Ovary (tissue), 10 donors: ENCODE measurements at regions of chr9 and their contacts with region 1.

Region 1: DNA sequence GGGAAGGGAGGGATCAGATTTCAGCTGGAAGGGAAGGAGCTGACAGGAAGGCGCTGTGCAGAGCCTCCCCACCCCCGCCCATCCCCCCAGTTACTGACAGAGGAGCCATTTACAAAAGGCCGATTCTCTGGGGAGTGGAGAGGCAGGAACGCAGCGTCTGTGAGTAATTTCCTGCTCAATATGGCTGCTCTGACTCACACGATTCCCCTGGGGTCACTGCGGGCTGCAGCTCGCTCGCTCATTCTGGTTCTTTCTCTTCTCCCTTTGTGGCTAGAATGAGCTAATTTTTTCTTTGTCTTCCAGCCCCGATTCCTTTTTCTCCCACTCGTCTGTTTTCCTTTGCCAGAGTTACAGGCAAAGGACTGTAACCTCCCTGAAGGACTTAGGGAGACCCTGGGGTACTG is 28.8 kb downstream of the PTPA start:
- DNase-seq: peak; percentile 86 to 95 (median 91)
- H3K4me3 ChIP-seq: peak overlapping the region; percentile 29
- H3K27ac ChIP-seq: peak overlapping the region; percentile 97 to 98
- H3K4me1 ChIP-seq: peaks cover 46% of the 10 kb centered on the region
- H3K27me3 ChIP-seq: no peaks in the 10 kb centered on the region
- CTCF ChIP-seq: no peak
- EP300 ChIP-seq: peak; percentile 76
- POLR2A ChIP-seq: no peak

Region 2: GRCh38 chr9:129028192-129028957 is 111.6 kb before region 1 on chr9 and contains the start of gene SH3GLB2:
- intact Hi-C with region 1: no loop called
- DNase-seq: peak; percentile 95 to 99 (median 98)
- H3K4me3 ChIP-seq: peak within 1 kb of the TSS; percentile 89
- H3K27ac ChIP-seq: peak within 1 kb of the TSS in 1 of 2 donors; percentile 37
- H3K4me1 ChIP-seq: peaks cover 1% of the 10 kb centered on the region
- H3K27me3 ChIP-seq: no peaks in the 10 kb centered on the region
- CTCF ChIP-seq: peak; percentile 78 to 96 (median 87)
- EP300 ChIP-seq: no peak
- POLR2A ChIP-seq: no peak
- total RNA-seq, gene SH3GLB2: 57.8 to 105 (median 88.8) TPM

Region 3: GRCh38 chr9:129110740-129111527 is 29.1 kb before region 1 on chr9 and contains the starts of genes CRAT and PTPA:
- intact Hi-C with region 1: no loop called
- DNase-seq: peak; percentile 96 to 98 (median 97)
- H3K4me3 ChIP-seq: peak within 1 kb of the TSS; percentile 78
- H3K27ac ChIP-seq: peak within 1 kb of the TSS; percentile 69 to 90
- H3K4me1 ChIP-seq: peaks cover 5% of the 10 kb centered on the region
- H3K27me3 ChIP-seq: no peaks in the 10 kb centered on the region
- CTCF ChIP-seq: no peak
- EP300 ChIP-seq: peak; percentile 50
- POLR2A ChIP-seq: peak; percentile 80
- total RNA-seq, gene CRAT: 23.0 to 42.7 (median 39.1) TPM
- total RNA-seq, gene PTPA: 32.1 to 107 (median 89.2) TPM

Region 4: GRCh38 chr9:129177791-129178559 is 38.0 kb after region 1 on chr9 and contains the start of gene IER5L:
- intact Hi-C with region 1: loop called in 3 of 4 experiments (anchors 2 kb)
- DNase-seq: peak; percentile 96 to 98 (median 98)
- H3K4me3 ChIP-seq: peak within 1 kb of the TSS; percentile 52
- H3K27ac ChIP-seq: peak within 1 kb of the TSS; percentile 97 to 99
- H3K4me1 ChIP-seq: peaks cover 8% of the 10 kb centered on the region
- H3K27me3 ChIP-seq: no peaks in the 10 kb centered on the region
- CTCF ChIP-seq: peak in 1 of 3 donors; percentile 25
- EP300 ChIP-seq: no peak
- POLR2A ChIP-seq: peak; percentile 95
- total RNA-seq, gene IER5L: 15.4 to 74.3 (median 45.0) TPM

Region 5: DNA sequence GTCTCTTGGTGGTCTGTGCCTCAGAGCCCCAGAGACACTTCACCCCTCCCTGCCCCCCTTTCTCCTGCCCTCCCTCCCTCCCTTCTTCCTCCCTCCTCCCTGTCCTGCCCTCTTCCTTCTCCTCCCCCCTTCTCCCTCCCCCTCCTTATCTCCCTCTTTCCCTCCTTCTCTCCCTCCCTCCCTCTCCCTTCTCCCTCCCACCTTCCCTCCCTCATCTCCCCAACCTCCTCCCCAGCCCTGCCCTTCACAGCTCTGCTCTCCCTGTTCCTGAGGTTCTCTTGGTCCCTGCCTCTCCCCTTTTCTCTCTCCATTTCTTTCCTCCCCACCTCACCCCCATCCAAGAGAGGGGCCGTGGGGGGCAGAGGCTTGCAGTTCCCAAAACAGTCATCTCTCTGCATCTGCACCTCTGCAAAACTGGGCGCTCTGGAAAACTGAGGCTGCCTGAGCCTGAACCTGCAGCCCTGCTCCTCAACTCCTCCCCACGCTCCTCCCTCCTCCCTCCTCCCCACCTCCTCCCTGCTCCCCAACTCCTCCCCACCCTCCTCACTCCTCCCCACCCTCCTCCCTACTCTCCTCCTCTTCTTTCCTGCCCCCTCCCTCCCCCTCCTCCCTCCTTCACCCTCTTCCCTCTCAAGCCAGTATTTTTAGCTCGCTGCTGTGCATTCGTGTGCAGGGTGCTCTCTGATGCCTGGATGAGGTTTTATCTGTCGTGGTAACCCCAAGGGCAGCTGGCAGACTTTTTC is 261.8 kb after region 1 on chr9:
- intact Hi-C with region 1: no loop called
- DNase-seq: peak; percentile 50 to 71 (median 57)
- H3K4me3 ChIP-seq: no peak overlapping the region
- H3K27ac ChIP-seq: peak overlapping the region; percentile 52 to 85
- H3K4me1 ChIP-seq: peaks cover 16% of the 10 kb centered on the region
- H3K27me3 ChIP-seq: no peaks in the 10 kb centered on the region
- CTCF ChIP-seq: no peak
- EP300 ChIP-seq: no peak
- POLR2A ChIP-seq: no peak

Region 6: GRCh38 chr9:129413537-129414376 is 273.8 kb after region 1 on chr9:
- intact Hi-C with region 1: loop called in 1 of 4 experiments (anchors 2 kb)
- DNase-seq: peak; percentile 99 to 100 (median 100)
- H3K4me3 ChIP-seq: peak overlapping the region; percentile 70
- H3K27ac ChIP-seq: peak overlapping the region; percentile 97
- H3K4me1 ChIP-seq: peaks cover 15% of the 10 kb centered on the region
- H3K27me3 ChIP-seq: no peaks in the 10 kb centered on the region
- CTCF ChIP-seq: peak in 2 of 3 donors; percentile 14 to 23
- EP300 ChIP-seq: peak; percentile 91
- POLR2A ChIP-seq: peak; percentile 94

Region 7: GRCh38 chr9:129487642-129488409 is 347.8 kb after region 1 on chr9:
- intact Hi-C with region 1: loop called (anchors 2 to 10 kb)
- DNase-seq: peak in 4 of 5 donors; percentile 69 to 80 (median 76)
- H3K4me3 ChIP-seq: peak overlapping the region; percentile 53
- H3K27ac ChIP-seq: peak overlapping the region; percentile 96 to 100
- H3K4me1 ChIP-seq: peaks cover 34% of the 10 kb centered on the region
- H3K27me3 ChIP-seq: no peaks in the 10 kb centered on the region
- CTCF ChIP-seq: no peak
- EP300 ChIP-seq: no peak
- POLR2A ChIP-seq: no peak

Region 8: DNA sequence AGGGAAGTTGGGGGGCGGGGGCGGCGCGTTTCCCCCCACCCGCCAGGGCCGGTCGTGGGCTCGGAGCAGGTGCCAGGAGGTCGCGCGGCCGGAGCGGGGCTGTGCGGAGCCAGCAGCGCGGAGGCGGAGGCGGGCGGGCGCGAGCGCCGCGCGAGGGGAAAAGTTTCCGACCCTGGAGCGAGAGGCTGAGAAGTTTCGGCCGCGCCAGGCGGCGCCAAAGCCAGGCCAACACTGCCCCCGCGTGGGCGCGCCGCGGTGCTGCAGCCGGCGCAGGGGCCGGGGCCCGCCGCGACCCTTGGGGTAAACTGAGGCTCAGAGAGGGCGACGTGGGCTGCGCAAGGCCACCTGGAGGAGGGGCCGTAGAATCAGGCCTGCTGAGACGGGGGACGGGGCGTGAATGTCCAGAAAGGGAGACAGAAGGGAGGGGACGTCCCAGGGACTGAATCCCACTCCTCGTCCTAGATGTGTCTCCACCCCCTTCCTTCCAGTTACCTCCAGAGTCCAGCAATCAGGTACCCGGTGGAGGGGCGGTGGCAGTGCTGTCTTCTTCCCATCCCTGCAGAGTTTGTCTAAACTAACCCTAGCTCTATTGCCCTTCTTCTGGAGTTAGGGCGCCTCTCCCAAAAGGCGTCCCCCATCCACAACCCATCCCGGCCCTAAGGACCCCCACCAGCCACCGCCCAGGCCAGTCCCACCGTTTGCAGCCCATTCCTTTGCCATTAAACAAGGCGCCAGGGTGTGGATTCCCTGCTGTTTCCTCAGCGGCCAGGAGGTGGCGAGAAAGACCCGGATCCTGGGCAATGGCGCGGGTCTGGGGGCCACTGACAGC is 470.7 kb after region 1 on chr9:
- intact Hi-C with region 1: loop called (anchors 2 kb)
- DNase-seq: peak; percentile 81 to 90 (median 87)
- H3K4me3 ChIP-seq: peak overlapping the region; percentile 57
- H3K27ac ChIP-seq: peak overlapping the region; percentile 56 to 89
- H3K4me1 ChIP-seq: peaks cover 16% of the 10 kb centered on the region
- H3K27me3 ChIP-seq: no peaks in the 10 kb centered on the region
- CTCF ChIP-seq: peak; percentile 84 to 100 (median 100)
- EP300 ChIP-seq: no peak
- POLR2A ChIP-seq: peak; percentile 47

Region 9: GRCh38 chr9:129776938-129777768 is 637.2 kb after region 1 on chr9:
- intact Hi-C with region 1: loop called in 1 of 4 experiments (anchors 10 kb)
- DNase-seq: peak; percentile 87 to 94 (median 92)
- H3K4me3 ChIP-seq: no peak overlapping the region
- H3K27ac ChIP-seq: peak overlapping the region in 1 of 2 donors; percentile 41
- H3K4me1 ChIP-seq: no peaks in the 10 kb centered on the region
- H3K27me3 ChIP-seq: no peaks in the 10 kb centered on the region
- CTCF ChIP-seq: no peak
- EP300 ChIP-seq: no peak
- POLR2A ChIP-seq: no peak